ENCODE measurements at regions of chrX and their contacts with region 1.

Region 1: GRCh38 chrX:24081661-24082264 is 27.0 kb downstream of the EIF2S3 start:
- DNase-seq: peak; percentile 36 to 71
- H3K4me3 ChIP-seq: no peak overlapping the region
- H3K27ac ChIP-seq: no peak overlapping the region
- H3K4me1 ChIP-seq: no peaks in the 10 kb centered on the region
- H3K27me3 ChIP-seq: no peaks in the 10 kb centered on the region
- CTCF ChIP-seq: peak in 1 of 2 experiments; percentile 33

Region 2: GRCh38 chrX:24150051-24150790 is 68.5 kb after region 1 on chrX:
- intact Hi-C with region 1: loop called (anchors 2 kb)
- DNase-seq: peak; percentile 80 to 90
- H3K4me3 ChIP-seq: peak overlapping the region; percentile 66 to 72
- H3K27ac ChIP-seq: peak overlapping the region; percentile 97 to 98
- H3K4me1 ChIP-seq: peaks cover 0 to 56% (median 30%) of the 10 kb centered on the region in 4 donors
- H3K27me3 ChIP-seq: no peaks in the 10 kb centered on the region
- CTCF ChIP-seq: peak; percentile 36 to 48

Region 3: DNA sequence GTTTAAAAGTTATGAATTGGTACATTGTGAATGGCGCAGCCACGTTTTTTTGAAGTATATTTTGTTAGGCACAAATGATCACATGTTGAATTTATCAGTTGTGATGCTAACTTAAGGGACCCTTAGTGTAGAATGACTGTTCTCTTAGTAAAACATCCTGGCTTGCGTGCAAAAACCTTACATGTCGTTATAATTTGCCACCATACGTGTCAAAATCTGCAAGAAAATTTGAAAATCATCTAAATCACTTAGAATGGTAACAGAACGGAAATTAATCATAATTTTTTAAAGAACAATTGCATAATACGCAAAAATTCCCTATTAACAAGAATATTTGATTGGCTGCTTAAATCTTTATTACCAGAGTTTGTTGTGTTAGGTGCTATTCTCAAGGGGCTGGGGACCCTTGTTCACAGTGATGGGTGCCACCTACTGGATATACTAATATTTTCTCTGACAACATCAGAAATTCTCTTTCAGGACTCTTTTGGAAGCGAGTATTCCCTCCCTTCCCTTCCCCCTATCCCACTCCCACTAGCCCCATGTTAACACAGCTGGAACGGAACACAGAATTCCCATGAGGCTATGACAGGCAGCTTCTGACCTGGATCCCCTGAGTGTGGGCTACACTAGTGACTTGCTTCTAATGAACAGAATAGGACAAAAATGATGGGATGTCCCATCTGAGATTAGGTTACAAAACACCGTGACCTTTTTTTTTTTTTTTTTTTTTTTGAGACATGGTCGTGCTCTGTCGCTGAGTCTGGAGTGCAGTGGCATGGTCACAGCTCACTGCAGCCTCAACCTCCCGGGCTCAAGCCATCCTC is 160.3 kb after region 1 on chrX:
- intact Hi-C with region 1: loop called (anchors 2 kb)
- DNase-seq: no peak
- H3K4me3 ChIP-seq: no peak overlapping the region
- H3K27ac ChIP-seq: no peak overlapping the region
- H3K4me1 ChIP-seq: no peaks in the 10 kb centered on the region
- H3K27me3 ChIP-seq: no peaks in the 10 kb centered on the region
- CTCF ChIP-seq: peak; percentile 19 to 29

Region 4: DNA sequence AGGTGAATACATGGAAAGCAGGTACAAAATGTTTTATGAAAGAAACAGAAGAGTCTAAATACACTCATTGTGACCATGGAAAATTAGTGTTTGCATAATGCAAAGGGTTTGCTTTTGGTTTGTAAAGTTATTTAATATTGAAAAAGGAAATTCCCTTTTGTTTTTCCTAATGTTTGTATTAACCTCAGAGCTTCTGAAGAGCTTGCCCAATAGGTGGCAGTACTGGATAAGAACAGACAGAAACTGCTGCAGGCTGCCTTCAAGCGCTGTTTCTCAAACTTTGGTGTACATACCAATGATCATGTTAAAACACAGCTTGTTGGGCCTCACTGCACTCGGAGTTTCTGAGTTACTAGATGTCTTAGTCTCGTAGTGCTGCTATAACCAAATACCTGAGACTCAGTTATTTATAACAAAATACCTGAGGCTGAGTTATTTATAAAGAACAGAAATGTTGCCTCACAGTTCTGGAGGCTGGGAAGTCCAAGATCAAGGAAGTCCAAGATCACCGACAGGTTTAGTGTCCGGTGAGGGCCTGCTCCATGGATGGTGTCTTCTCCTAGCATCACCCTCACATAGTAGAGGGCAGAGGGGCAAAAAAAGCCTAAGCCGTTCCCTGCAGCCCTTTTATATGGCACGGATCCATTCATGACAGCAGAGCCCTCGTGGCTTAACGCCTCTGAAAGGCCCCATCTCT is 177.9 kb after region 1 on chrX:
- intact Hi-C with region 1: no loop called
- DNase-seq: peak in 1 of 2 donors; percentile 28
- H3K4me3 ChIP-seq: no peak overlapping the region
- H3K27ac ChIP-seq: no peak overlapping the region
- H3K4me1 ChIP-seq: no peaks in the 10 kb centered on the region
- H3K27me3 ChIP-seq: no peaks in the 10 kb centered on the region
- CTCF ChIP-seq: peak in 1 of 2 experiments; percentile 34

Measured in tibial artery (tissue), 4 donors.